Activated CD8-positive, alpha-beta T cell treated with anti-CD3 and anti-CD28 coated beads for 36 hours (primary cell): ENCODE measurements at regions of chr4 and their contacts with region 1.

Region 1: DNA sequence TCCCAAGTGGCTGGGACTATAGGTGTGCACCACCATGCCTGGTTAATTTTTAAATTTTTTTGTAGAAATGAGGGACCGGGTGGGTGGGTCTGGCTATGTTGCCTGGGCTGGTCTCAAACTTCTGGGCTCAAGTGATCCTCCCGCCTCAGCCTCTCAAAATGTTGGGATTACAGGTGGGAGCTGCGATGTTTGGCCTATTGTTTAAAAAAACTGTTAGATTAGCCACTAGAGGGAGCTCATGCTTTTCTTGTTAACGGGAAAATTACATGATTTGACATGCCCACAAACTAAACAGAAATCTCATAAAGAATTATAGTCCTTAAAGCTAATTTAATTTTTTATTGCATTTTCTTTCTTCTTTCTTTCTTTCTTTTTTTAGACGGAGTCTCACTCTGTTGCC is 5.0 kb upstream of the SDAD1 start:
- DNase-seq: peak; percentile 17
- ATAC-seq: no peak
- H3K4me3 Mint-ChIP-seq: no peak overlapping the region
- H3K27ac Mint-ChIP-seq: no peak overlapping the region
- H3K4me1 Mint-ChIP-seq: peaks cover 3% of the 10 kb centered on the region
- H3K27me3 Mint-ChIP-seq: peaks cover 3% of the 10 kb centered on the region
- CTCF ChIP-seq: peak; percentile 84

Region 2: GRCh38 chr4:75985116-75985515 is 10.6 kb before region 1 on chr4:
- CTCF ChIA-PET with region 1: interaction called, 21 read pairs
- POLR2A ChIA-PET with region 1: no interaction called
- intact Hi-C with region 1: no loop called
- DNase-seq: no peak
- ATAC-seq: no peak
- H3K4me3 Mint-ChIP-seq: no peak overlapping the region
- H3K27ac Mint-ChIP-seq: no peak overlapping the region
- H3K4me1 Mint-ChIP-seq: peaks cover 26% of the 10 kb centered on the region
- H3K27me3 Mint-ChIP-seq: no peaks in the 10 kb centered on the region
- CTCF ChIP-seq: no peak

Region 3: DNA sequence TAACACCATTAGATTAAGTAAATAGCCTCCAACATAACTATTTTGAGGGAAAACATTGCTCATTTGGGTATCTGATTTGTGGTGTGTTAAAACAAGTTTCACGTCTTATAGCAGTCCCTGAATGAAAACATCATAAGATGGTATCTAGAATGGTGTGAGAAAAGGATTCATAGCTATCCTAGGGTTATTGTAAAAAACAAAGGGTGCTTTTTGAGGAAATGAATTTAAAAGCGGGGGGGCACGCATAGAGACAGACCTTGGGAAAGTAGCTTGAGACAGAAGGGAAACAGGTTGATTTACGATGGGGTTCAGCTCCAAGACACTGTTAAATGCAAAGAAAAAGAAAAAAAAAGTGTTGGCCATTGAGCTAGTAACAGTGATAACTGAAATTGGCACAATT is 28.3 kb after region 1 on chr4:
- CTCF ChIA-PET with region 1: interaction called, 11 read pairs
- POLR2A ChIA-PET with region 1: no interaction called
- intact Hi-C with region 1: no loop called
- DNase-seq: no peak
- ATAC-seq: peak; percentile 45
- H3K4me3 Mint-ChIP-seq: no peak overlapping the region
- H3K27ac Mint-ChIP-seq: no peak overlapping the region
- H3K4me1 Mint-ChIP-seq: peaks cover 23% of the 10 kb centered on the region
- H3K27me3 Mint-ChIP-seq: peaks cover 15% of the 10 kb centered on the region
- CTCF ChIP-seq: no peak

Region 4: DNA sequence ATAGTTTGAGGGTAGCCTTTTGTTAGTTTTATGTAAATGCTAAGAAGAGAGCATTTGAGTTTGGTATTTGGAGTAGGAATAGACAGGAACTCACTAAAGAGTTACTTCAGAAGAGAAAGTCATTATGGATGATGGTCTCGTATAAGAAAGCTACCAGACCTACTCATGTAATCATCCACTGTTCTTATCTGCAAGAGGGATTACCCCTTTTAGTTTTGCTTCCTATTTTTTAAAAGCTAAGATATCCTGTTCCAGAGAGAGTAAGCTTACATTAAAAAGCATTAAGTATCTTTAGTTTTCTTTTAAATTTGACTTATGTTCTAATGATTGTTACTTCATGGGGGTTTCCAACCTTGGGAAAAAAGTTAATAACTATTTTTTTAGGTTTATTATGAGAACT is 66.3 kb after region 1 on chr4:
- CTCF ChIA-PET with region 1: interaction called, 62 read pairs
- POLR2A ChIA-PET with region 1: interaction called, 4 read pairs
- intact Hi-C with region 1: loop called (anchors 1 kb)
- DNase-seq: no peak
- ATAC-seq: no peak
- H3K4me3 Mint-ChIP-seq: no peak overlapping the region
- H3K27ac Mint-ChIP-seq: no peak overlapping the region
- H3K4me1 Mint-ChIP-seq: peaks cover 42% of the 10 kb centered on the region
- H3K27me3 Mint-ChIP-seq: peaks cover 19% of the 10 kb centered on the region
- CTCF ChIP-seq: no peak

Region 5: GRCh38 chr4:76074468-76074867 is 78.7 kb after region 1 on chr4 and contains the start of gene ART3:
- CTCF ChIA-PET with region 1: interaction called, 46 read pairs
- POLR2A ChIA-PET with region 1: interaction called, 3 read pairs
- intact Hi-C with region 1: no loop called
- DNase-seq: no peak
- ATAC-seq: no peak
- H3K4me3 Mint-ChIP-seq: no peak within 1 kb of the TSS
- H3K27ac Mint-ChIP-seq: no peak within 1 kb of the TSS
- H3K4me1 Mint-ChIP-seq: no peaks in the 10 kb centered on the region
- H3K27me3 Mint-ChIP-seq: no peaks in the 10 kb centered on the region
- CTCF ChIP-seq: no peak
- total RNA-seq, gene ART3: not detected

Region 6: DNA sequence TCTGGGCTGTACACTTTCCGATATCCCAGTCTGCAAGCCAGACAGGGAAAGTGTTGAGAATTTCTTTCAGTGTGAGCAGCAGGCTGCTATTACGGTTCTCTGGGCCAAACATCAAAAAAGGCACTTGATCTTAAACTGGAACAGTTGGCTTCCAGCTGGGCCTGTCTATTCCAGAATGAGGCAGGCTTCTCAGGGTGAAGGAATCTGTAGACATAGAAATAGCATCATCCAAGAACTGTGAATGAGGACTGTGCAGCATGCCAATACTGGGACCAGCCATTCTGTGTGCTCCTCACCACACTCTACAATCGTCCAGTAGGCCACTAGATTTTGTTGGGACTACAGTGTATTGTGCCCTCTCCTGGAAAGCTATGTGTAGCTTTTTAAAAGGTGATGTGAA is 109.9 kb after region 1 on chr4:
- CTCF ChIA-PET with region 1: interaction called, 10 read pairs
- POLR2A ChIA-PET with region 1: no interaction called
- intact Hi-C with region 1: no loop called
- DNase-seq: no peak
- ATAC-seq: no peak
- H3K4me3 Mint-ChIP-seq: no peak overlapping the region
- H3K27ac Mint-ChIP-seq: no peak overlapping the region
- H3K4me1 Mint-ChIP-seq: no peaks in the 10 kb centered on the region
- H3K27me3 Mint-ChIP-seq: no peaks in the 10 kb centered on the region
- CTCF ChIP-seq: no peak